Activated T-helper 2 cell treated with anti-CD3 and anti-CD28 coated beads, Interferon-gamma antibody, Interleukin-2, Interleukin-4, amounts not matched to agents 10 μg/mL and 5 μg/mL and 100 μg/mL, durations not matched to agents 14 hours and 24 hours and 36 hours (primary cell): ENCODE measurements at regions of chr19 and their contacts with region 1.

Region 1: GRCh38 chr19:4123615-4124568 is at the start of gene MAP2K2:
- DNase-seq: peak; percentile 93
- H3K4me3 Mint-ChIP-seq: peak within 1 kb of the TSS; percentile 94
- H3K27ac Mint-ChIP-seq: peak within 1 kb of the TSS; percentile 91
- H3K4me1 Mint-ChIP-seq: peaks cover 17% of the 10 kb centered on the region
- H3K27me3 Mint-ChIP-seq: no peaks in the 10 kb centered on the region
- total RNA-seq, gene MAP2K2: 131 and 141 TPM in 2 replicates

Region 2: GRCh38 chr19:4007021-4007835 is 116.7 kb before region 1 on chr19 and contains the start of gene PIAS4:
- intact Hi-C with region 1: loop called (anchors 10 kb)
- DNase-seq: peak; percentile 94
- H3K4me3 Mint-ChIP-seq: peak within 1 kb of the TSS; percentile 86
- H3K27ac Mint-ChIP-seq: peak within 1 kb of the TSS; percentile 73
- H3K4me1 Mint-ChIP-seq: peaks cover 8% of the 10 kb centered on the region
- H3K27me3 Mint-ChIP-seq: no peaks in the 10 kb centered on the region
- total RNA-seq, gene PIAS4: 31.5 and 36.3 TPM in 2 replicates

Region 3: DNA sequence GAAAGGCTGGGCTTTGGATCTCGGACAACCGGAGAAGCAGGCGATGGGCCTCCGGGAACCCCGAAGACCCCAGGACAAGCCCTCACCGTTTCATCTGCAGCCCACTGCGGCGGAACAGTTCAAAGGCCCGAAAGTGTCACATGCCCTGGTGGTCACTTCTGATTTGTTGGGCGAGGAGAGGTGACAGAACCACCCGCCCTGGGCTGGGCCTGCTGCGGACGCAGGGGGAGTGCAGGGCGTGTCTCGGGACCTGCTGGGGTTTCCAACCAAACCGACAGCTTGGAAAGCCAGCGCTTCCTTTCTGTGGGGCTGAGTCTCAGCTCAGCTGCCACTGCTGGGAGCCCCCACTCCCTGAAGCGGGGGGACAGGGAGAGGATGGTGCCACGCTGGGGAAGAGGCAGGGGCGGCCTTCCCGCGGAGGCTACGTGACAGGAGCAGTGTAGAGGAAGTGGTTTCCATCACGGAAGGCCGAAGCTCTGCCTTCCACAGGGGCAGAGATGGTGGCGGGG is 34.4 kb before region 1 on chr19:
- intact Hi-C with region 1: loop called (anchors 5 kb)
- DNase-seq: peak; percentile 72
- H3K4me3 Mint-ChIP-seq: peak overlapping the region; percentile 81
- H3K27ac Mint-ChIP-seq: peak overlapping the region; percentile 94
- H3K4me1 Mint-ChIP-seq: peaks cover 27% of the 10 kb centered on the region
- H3K27me3 Mint-ChIP-seq: no peaks in the 10 kb centered on the region

Region 4: DNA sequence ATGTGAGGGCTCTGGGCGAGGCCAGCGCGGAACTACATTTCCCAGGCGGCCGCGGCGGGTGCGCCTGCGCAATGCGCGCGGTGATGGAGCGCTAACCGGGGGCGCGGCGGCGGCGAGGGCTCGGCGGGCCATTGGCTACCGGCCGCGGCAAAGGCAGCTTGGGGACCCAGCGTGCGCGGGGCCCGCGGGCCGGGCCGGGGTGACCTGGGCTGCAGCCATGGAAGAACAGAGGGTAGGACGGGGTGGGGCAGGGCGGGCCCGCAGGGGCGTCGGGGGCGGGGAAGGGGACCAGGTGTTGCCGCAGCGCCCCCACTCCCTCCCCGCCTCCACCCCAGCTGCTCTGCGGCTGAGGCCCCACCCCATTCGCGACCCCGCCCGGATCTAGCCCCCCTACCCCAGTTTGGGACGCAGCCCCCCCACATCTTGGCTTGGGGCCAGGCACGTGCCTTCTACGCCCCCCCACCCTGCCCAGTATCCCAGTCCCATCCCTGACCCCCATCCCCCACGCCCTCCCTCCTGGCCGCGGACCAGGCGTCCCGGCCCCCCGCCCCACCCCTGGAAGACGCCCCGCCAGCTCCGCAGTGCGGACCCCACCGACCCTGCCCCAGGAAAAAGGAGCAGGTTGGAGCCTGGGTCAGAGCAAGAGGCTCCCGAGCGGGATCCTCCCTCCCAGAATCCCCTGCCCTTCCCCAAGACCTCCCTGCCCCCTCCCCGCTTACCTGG is 180.8 kb after region 1 on chr19 and contains the start of gene FSD1:
- intact Hi-C with region 1: no loop called
- DNase-seq: peak; percentile 70
- H3K4me3 Mint-ChIP-seq: peak within 1 kb of the TSS; percentile 76
- H3K27ac Mint-ChIP-seq: peak within 1 kb of the TSS; percentile 67
- H3K4me1 Mint-ChIP-seq: peaks cover 25% of the 10 kb centered on the region
- H3K27me3 Mint-ChIP-seq: no peaks in the 10 kb centered on the region
- total RNA-seq, gene FSD1: 26.8 and 32.8 TPM in 2 replicates